Activated CD4-positive, alpha-beta memory T cell treated with anti-CD3 and anti-CD28 coated beads for 36 hours (primary cell): ENCODE measurements at regions of chr1 and their contacts with region 1.

Region 1: GRCh38 chr1:154791292-154792166 is 78.6 kb downstream of the KCNN3 start:
- DNase-seq: peak; percentile 89
- H3K4me3 Mint-ChIP-seq: peak overlapping the region; percentile 50
- H3K27ac Mint-ChIP-seq: peak overlapping the region; percentile 88
- H3K4me1 Mint-ChIP-seq: peaks cover 30% of the 10 kb centered on the region
- H3K27me3 Mint-ChIP-seq: peaks cover 3% of the 10 kb centered on the region

Region 2: GRCh38 chr1:154663471-154664060 is 128.0 kb before region 1 on chr1:
- CTCF ChIA-PET with region 1: no interaction called
- POLR2A ChIA-PET with region 1: no interaction called
- intact Hi-C with region 1: no loop called
- DNase-seq: no peak
- H3K4me3 Mint-ChIP-seq: no peak overlapping the region
- H3K27ac Mint-ChIP-seq: no peak overlapping the region
- H3K4me1 Mint-ChIP-seq: no peaks in the 10 kb centered on the region
- H3K27me3 Mint-ChIP-seq: peaks cover 13% of the 10 kb centered on the region

Region 3: GRCh38 chr1:154736841-154737240 is 54.7 kb before region 1 on chr1:
- CTCF ChIA-PET with region 1: no interaction called
- POLR2A ChIA-PET with region 1: no interaction called
- intact Hi-C with region 1: loop called (anchors 1 kb)
- DNase-seq: peak; percentile 82
- H3K4me3 Mint-ChIP-seq: no peak overlapping the region
- H3K27ac Mint-ChIP-seq: peak overlapping the region; percentile 35
- H3K4me1 Mint-ChIP-seq: peaks cover 42% of the 10 kb centered on the region
- H3K27me3 Mint-ChIP-seq: peaks cover 25% of the 10 kb centered on the region

Region 4: DNA sequence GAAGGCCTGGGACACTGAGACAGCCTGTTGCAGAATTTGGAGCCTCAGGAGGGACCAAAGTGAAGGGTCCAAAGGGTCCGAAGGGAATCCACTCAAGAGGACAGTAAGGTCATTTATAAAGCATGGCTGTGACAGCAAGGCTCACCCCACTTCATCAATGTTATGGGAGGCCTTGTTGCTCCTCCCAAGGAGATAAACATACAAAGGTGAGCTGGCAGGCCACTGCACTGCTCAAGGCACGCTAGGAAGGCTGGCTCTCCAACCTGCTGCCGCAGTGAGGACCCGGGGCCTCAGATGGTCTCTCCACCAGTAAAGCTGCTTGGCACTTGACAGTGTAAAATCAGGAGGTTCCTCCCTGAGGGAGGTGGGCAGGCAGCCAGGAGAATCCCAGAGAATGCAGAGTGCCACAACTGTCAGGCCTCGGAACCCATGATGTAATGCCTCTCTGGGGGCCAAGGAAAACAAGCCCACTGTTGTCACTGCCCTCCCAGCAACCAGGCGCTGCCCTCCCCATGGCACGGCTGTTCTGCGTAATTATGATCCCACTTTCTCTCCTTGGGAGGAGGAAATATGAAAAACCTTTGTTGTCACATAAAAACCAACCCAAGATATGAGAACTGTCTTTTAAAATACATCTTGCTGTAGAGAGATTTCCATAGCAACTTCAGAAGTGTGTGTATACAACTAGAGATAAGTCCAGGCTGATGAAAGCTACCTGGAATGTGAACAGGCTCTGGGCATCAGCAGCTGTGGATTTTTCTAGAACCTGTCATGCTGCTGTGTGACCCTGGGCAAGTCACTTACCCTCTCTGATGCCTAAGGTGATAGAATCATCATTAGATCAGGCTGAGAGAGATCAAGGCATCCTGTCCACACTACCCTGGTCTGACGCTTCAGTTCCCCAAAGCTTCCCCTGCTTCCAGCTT is 24.0 kb before region 1 on chr1:
- CTCF ChIA-PET with region 1: no interaction called
- POLR2A ChIA-PET with region 1: no interaction called
- intact Hi-C with region 1: no loop called
- DNase-seq: no peak
- H3K4me3 Mint-ChIP-seq: no peak overlapping the region
- H3K27ac Mint-ChIP-seq: no peak overlapping the region
- H3K4me1 Mint-ChIP-seq: peaks cover 11% of the 10 kb centered on the region
- H3K27me3 Mint-ChIP-seq: peaks cover 3% of the 10 kb centered on the region

Region 5: DNA sequence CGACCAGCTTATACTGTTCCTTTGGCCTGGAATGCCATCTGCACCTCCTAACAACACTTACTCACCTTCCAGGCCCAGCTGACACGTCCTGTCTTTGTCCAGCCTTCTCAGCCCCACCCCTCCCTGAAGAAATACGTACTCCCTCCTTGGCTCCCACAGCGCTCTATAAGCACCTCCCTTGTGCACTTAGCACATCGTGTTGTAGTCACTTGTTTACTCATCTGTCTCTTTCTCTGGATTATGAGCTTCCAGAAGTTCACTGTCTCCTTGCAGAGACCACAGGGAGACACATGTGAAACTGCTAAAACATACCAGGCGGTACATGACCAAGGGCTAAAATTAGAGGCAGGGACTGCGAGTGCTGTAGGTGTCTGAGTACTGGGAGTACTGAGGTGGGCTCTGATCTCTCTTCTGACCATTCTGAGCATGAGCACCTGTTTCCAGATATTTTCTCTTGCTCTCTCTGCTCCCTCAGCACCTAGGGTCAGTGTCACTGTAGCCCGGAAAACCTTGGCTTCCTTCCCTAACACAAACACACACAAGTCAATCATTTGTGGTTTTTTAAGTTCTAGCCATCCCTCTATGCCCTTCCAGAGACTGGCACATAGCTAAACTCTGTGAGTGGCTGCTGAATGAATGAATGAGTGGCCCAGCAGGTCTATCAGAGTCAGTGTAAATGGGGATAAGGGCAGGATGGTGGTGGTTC is 247.2 kb after region 1 on chr1:
- CTCF ChIA-PET with region 1: no interaction called
- POLR2A ChIA-PET with region 1: no interaction called
- intact Hi-C with region 1: no loop called
- DNase-seq: no peak
- H3K4me3 Mint-ChIP-seq: no peak overlapping the region
- H3K27ac Mint-ChIP-seq: no peak overlapping the region
- H3K4me1 Mint-ChIP-seq: no peaks in the 10 kb centered on the region
- H3K27me3 Mint-ChIP-seq: peaks cover 2% of the 10 kb centered on the region